Motor neuron (in vitro differentiated cells): ENCODE measurements at regions of chr5 and their contacts with region 1.

Region 1: DNA sequence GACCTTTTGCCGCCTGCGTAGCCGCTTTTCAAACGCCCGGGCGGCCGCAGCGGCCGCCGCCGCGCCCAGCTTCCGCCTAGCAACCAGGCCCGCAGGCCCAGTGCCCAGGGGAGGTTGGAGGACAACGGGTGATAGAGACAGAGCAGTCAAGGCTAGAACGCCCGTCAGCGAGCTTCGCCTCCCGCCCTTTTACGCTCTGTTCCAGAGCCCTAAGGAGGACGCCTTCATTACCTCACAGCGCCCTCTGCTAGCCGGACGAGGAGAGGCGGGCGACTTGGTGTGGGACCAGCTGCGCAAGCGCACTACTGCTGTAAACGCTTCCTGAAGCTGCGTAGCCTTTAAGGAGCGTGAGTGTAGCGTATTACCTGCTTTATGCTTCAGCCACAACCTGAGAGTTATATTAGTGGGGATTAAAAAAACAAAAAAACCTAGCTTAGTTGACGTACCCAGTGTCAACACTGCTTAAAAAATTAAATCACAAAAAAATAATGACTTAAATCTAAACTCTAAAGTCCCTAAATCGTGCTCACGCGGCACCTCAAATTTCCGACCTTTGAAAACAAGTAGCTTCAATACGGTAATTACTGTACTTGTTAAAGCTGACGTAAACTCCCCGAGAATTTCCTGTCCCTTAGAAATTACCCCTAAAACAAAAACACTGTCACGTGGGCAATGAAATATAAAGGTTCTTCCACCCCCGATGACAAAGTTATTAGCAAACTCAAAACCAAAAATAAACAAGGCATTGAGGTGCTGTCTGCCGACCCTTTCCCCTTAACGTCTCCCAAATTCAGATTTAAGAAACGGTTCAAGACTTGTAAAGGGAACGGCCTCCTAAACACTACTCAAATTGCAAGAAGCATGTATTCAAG is at the start of gene CEP120:
- ATAC-seq: peak; percentile 97 to 99 (median 99)
- H3K4me3 ChIP-seq: peak within 1 kb of the TSS; percentile 46 to 60 (median 52)
- H3K27ac ChIP-seq: peak within 1 kb of the TSS; percentile 66 to 79
- H3K4me1 ChIP-seq: peaks cover 5% of the 10 kb centered on the region in 2 donors
- total RNA-seq, gene CEP120: 13.7 to 28.3 (median 19.0) TPM

Region 2: GRCh38 chr5:123582550-123583285 is 159.2 kb after region 1 on chr5:
- in situ Hi-C with region 1: loop called in 1 of 9 experiments (anchors 25 kb)
- ATAC-seq: no peak
- H3K4me3 ChIP-seq: no peak overlapping the region
- H3K27ac ChIP-seq: no peak overlapping the region
- H3K4me1 ChIP-seq: no peaks in the 10 kb centered on the region

Region 3: DNA sequence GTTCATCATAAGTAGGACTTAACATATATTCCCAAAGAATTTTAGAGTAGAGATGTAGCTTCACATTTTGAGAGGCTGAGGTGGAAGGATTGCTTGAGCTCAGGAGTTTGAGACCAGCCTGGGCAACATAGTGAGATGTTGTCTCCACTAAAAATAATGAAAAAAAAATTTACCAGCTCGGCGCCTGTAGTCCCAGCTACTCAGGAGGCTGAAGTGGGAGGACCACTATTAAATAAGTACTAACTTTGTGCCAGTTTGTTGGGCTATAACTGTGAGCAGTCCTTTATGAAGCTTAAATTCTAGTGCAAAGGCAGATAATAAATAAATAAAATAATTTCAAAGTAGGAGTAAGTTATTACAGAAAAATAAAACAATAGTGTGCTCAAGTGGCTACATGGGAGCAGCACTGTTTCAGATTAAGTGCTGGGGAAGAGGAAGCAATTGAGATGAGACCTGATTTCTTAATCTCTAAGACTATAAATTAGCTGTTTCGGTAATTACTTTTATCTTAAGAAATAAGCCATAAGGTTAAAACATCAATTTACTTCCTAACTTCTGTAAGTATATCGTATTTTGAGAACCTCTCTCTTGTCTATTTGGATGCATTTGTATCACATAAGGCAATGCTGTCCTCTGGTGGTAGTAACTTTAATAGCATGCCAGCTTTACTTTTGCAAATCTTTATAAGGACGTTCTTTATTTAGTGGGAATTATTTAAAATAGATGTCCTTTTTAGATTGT is 187.3 kb after region 1 on chr5:
- in situ Hi-C with region 1: loop called in 4 of 9 experiments (anchors 25 kb)
- ATAC-seq: peak in 3 of 8 experiments; percentile 49 to 66 (median 50)
- H3K4me3 ChIP-seq: no peak overlapping the region
- H3K27ac ChIP-seq: no peak overlapping the region
- H3K4me1 ChIP-seq: no peaks in the 10 kb centered on the region